GM18951 (cell line): ENCODE measurements at regions of chr1 and their contacts with region 1.

Region 1: DNA sequence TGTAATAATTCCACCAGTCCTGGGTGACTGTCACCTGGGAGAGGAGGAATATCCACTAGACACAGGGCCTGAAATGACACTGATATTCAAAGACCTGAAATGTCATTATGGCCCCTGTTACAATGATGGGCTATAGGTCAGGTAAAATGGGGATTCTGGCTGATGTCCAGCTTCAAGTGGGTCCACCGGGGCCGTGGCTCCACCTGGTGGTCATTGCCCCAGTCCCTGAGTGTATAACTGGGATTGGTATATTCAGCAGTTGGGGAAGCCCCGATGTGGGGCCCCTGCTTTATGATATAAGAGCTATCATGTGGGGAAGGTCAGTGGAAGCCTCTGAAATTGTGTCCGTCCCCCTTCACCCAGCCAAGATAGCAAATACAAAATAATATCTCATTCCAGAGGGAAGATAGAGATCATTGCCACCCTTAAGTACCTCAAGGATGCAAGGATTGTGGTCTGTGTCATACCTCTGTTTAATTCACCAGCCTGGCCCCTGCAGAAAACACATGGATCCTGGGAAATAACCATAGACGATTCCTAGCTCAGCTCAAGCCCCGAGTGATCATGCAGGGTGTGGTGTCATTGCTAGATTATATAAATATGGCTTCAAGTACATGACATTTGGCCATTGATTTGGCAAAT is 19.4 kb downstream of the PLEKHO1 start:
- POLR2A ChIP-seq: no peak

Region 2: GRCh38 chr1:150072959-150073358 is 96.1 kb before region 1 on chr1:
- in situ Hi-C with region 1: loop called (anchors 5 kb)
- POLR2A ChIP-seq: no peak